ENCODE measurements at regions of chr10 and their contacts with region 1.

Region 1: DNA sequence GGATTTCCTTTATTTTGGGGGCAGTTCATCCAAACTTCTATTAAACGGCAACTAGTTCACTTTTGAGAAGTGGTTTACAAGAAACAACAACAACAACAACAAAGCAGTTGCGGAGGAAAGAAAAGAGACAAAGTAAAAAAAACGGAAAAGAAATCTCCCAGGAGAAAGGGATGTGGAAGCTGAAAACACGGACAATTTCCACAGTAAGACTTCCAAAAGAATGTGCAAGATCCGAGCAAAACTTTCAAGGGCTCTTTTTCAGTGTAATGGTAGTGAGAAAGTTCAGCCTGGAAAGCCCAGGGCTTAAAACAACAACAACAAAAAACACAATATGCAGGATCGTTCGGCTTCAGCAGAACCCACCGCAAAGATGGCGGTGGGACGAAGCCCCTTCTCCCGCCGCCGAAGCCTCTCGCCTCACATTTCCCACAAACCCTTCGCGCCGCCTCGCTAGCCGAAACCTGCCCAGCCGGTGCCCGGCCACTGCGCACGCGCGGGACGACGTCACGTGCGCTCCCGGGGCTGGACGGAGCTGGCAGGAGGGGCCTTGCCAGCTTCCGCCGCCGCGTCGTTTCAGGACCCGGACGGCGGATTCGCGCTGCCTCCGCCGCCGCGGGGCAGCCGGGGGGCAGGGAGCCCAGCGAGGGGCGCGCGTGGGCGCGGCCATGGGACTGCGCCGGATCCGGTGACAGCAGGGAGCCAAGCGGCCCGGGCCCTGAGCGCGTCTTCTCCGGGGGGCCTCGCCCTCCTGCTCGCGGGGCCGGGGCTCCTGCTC is at the start of gene TNKS2:
- DNase-seq: peak; percentile 95 to 98 (median 95)
- ATAC-seq: peak; percentile 93 to 98 (median 97)
- H3K4me3 ChIP-seq: peak within 1 kb of the TSS; percentile 76 to 99 (median 92)
- H3K27ac ChIP-seq: peak within 1 kb of the TSS; percentile 82 to 98 (median 97)
- H3K4me1 ChIP-seq: peaks cover 0 to 52% (median 30%) of the 10 kb centered on the region in 12 donors
- H3K27me3 ChIP-seq: no peaks in the 10 kb centered on the region
- CTCF ChIP-seq: peak in 1 of 12 donors; percentile 17
- POLR2A ChIP-seq: peak; percentile 26 to 92
- total RNA-seq, gene TNKS2: 10.3 to 24.7 (median 15.4) TPM

Region 2: GRCh38 chr10:91541481-91541880 is 256.6 kb before region 1 on chr10:
- intact Hi-C with region 1: no loop called
- DNase-seq: no peak
- ATAC-seq: peak in 2 of 4 donors; percentile 37 to 55
- H3K4me3 ChIP-seq: no peak overlapping the region
- H3K27ac ChIP-seq: peak overlapping the region in 1 of 12 donors; percentile 4
- H3K4me1 ChIP-seq: peaks cover 0 to 19% (median 7%) of the 10 kb centered on the region in 12 donors
- H3K27me3 ChIP-seq: no peaks in the 10 kb centered on the region
- CTCF ChIP-seq: no peak
- POLR2A ChIP-seq: no peak

Region 3: DNA sequence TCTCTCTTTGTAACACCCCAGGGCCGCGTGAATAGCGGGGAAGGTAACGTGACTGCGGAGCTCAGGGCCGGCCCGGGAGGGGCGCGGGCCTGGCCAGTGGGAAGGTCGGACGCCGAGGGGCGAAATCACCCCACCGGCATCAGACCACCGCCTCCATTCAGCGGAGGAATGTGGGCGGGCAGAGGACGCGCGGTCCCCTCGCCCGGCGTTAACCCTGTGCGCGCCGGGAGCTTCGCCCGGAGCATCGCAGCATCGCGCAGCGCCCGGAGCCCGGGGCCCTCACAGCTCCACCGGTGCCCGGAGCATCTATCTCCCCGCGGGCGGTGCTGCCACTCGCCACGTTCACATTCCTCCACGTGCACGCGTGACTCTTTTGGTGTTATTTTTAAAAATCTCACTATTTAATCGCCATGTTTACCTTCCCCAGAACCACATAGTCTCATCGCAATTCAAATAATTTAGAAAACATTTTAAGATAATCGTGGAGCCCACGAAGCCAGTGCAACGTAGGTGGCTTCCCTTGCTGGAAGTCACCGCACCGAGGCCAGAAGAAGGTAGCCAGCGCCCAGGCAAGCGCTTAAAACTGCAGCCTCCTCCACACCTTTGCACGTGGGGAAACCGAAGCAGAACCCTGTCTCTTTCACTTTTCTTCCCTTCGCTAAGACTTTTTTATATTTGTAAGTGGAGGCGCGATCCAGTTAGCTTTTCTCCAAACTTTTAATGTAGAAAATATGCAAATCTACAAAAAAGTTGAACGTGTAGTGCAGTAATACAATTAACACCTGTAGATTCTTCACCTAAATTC is 89.4 kb after region 1 on chr10:
- intact Hi-C with region 1: loop called in 1 of 10 experiments (anchors 1 kb)
- DNase-seq: peak in 3 of 5 donors; percentile 22 to 64 (median 46)
- ATAC-seq: peak in 3 of 4 donors; percentile 49 to 68 (median 64)
- H3K4me3 ChIP-seq: peak overlapping the region; percentile 19 to 70 (median 52)
- H3K27ac ChIP-seq: peak overlapping the region in 2 of 12 donors; percentile 19 to 28
- H3K4me1 ChIP-seq: peaks cover 0 to 34% (median 23%) of the 10 kb centered on the region in 12 donors
- H3K27me3 ChIP-seq: peaks cover 0 to 10% (median 0%) of the 10 kb centered on the region in 9 donors
- CTCF ChIP-seq: no peak
- POLR2A ChIP-seq: no peak

Region 4: GRCh38 chr10:91923371-91924211 is 125.5 kb after region 1 on chr10 and contains the start of gene BTAF1:
- intact Hi-C with region 1: loop called in 1 of 10 experiments (anchors 5 kb)
- DNase-seq: peak; percentile 91 to 97 (median 95)
- ATAC-seq: peak; percentile 99 to 100 (median 100)
- H3K4me3 ChIP-seq: peak within 1 kb of the TSS; percentile 56 to 95 (median 88)
- H3K27ac ChIP-seq: peak within 1 kb of the TSS; percentile 76 to 99 (median 95)
- H3K4me1 ChIP-seq: peaks cover 0 to 36% (median 26%) of the 10 kb centered on the region in 12 donors
- H3K27me3 ChIP-seq: peaks cover 0 to under 1% (median 0%) of the 10 kb centered on the region in 9 donors
- CTCF ChIP-seq: peak in 1 of 12 donors; percentile 16
- POLR2A ChIP-seq: peak; percentile 31 to 90
- total RNA-seq, gene BTAF1: 10.9 to 22.3 (median 12.0) TPM